Activated CD8-positive, alpha-beta T cell treated with anti-CD3 and anti-CD28 coated beads, Interleukin-2, amount 10 ng/mL, durations not matched to agents 7 days and 5 days (primary cell): ENCODE measurements at regions of chr15 and their contacts with region 1.

Region 1: DNA sequence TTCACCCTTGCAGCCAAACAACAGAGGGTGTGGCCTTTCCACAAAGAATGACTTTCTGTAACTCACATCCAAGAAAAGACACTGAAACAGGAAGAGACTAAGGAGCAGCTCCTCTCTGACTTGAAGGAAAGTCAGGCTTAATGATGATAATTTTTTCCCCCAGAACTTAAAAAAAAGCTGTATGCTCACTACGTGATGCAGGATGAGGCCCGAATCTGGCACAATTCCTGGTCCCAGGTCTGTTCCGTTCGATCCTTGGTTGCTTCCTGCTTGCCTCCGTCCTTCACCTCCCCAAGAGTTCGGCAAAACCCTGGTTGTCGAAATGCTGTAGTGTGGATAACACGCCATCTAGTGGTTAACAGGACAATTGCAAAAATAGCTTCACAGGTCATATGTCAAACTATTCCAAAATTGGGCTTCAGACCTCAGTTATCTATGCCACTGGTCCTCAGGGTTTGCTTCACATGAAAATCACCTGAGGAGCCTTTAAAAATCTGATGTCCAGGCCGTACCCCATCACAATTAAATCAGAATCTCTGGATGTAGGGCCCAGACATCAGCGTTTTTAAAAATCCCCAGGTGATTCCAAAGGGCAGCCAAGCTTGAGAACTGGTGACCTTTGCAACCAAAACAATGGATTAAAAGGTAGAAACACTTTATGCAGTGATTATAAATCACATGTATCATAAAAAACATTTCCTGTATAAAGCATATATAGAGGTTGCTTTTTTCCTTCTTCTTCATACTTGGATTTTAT is 28.1 kb upstream of the SYNM start:
- DNase-seq: peak; percentile 60
- ATAC-seq: peak; percentile 88
- H3K4me3 Mint-ChIP-seq: peak overlapping the region; percentile 63
- H3K27ac Mint-ChIP-seq: no peak overlapping the region
- H3K4me1 Mint-ChIP-seq: peaks cover 5% of the 10 kb centered on the region
- H3K27me3 Mint-ChIP-seq: peaks cover 17% of the 10 kb centered on the region

Region 2: GRCh38 chr15:98518823-98519561 is 557.7 kb before region 1 on chr15:
- CTCF ChIA-PET with region 1: interaction called, 17 read pairs
- POLR2A ChIA-PET with region 1: no interaction called
- DNase-seq: peak; percentile 63
- ATAC-seq: peak; percentile 86
- H3K4me3 Mint-ChIP-seq: no peak overlapping the region
- H3K27ac Mint-ChIP-seq: no peak overlapping the region
- H3K4me1 Mint-ChIP-seq: peaks cover 7% of the 10 kb centered on the region
- H3K27me3 Mint-ChIP-seq: peaks cover 4% of the 10 kb centered on the region

Region 3: GRCh38 chr15:98881526-98882520 is 194.9 kb before region 1 on chr15:
- CTCF ChIA-PET with region 1: interaction called, 13 read pairs
- POLR2A ChIA-PET with region 1: no interaction called
- DNase-seq: peak; percentile 22
- ATAC-seq: peak; percentile 61
- H3K4me3 Mint-ChIP-seq: no peak overlapping the region
- H3K27ac Mint-ChIP-seq: no peak overlapping the region
- H3K4me1 Mint-ChIP-seq: no peaks in the 10 kb centered on the region
- H3K27me3 Mint-ChIP-seq: no peaks in the 10 kb centered on the region

Region 4: DNA sequence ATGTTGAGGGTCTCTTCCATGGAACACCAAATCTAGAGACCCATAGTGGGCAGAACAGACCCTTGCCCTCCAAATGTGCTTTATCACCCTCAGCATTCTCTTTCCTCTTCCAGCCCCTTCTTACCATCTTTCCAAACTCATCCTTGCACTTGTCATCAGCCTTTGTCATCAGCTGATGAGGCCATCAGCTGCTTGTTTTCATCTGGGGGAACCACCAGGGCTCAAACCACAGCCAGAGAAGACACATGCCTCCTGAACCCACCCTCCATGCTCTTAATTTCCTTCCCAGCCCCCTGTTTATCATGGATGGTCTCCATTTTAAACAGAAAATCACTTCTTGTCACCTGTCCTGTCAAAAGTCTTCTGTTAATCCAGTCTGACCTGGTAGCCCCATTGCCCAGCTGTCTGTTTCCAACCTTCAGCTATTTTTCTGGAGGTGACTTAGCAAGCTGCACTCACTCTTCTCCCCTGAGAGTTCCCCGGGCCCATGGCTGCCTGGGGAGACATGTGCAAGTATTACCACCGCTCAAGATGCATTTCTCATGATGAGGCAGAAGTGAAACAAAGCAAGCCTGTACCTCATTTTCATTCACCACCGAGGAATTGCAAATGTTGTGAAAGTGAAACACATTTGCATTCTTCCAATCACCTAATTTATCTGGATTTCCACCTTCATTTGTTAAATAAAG is 13.4 kb after region 1 on chr15:
- CTCF ChIA-PET with region 1: interaction called, 16 read pairs
- POLR2A ChIA-PET with region 1: interaction called, 3 read pairs
- DNase-seq: no peak
- ATAC-seq: no peak
- H3K4me3 Mint-ChIP-seq: no peak overlapping the region
- H3K27ac Mint-ChIP-seq: no peak overlapping the region
- H3K4me1 Mint-ChIP-seq: peaks cover 6% of the 10 kb centered on the region
- H3K27me3 Mint-ChIP-seq: no peaks in the 10 kb centered on the region

Region 5: DNA sequence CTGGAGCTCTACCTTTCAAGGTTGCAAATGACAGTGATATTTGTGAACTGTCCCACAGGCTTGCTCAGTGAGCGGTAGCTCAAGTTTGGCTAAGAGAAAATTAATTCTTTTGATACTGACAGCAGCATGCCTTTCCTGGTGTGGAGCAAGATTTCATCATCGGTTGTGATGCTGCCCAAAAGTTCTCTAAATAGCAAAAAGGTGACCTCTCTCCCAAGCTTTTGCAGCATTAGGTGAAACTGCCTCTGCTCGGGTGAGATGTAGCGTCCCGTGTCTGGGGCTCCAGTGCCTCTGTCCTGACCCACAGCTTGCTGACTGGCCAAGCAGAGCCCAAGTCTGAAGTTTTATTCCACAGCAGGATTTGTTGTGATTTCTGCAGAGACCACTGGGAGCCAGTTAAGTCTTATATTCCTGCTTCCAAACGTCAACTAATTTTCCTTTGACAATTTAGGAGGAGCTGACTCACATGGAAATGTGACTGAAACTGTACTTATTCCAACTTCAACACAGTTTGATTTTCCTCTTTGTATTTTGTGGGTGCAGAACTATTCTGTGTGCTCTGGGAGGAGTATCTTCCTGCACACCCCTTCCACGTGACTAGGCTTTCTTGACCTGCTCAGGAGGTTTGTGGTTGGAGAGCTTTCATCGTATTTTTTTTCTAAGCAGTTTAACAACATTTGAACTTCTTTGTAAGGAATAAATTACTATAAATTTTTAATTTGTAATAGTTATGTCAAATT is 34.0 kb after region 1 on chr15:
- CTCF ChIA-PET with region 1: interaction called, 13 read pairs
- POLR2A ChIA-PET with region 1: no interaction called
- DNase-seq: no peak
- ATAC-seq: no peak
- H3K4me3 Mint-ChIP-seq: no peak overlapping the region
- H3K27ac Mint-ChIP-seq: no peak overlapping the region
- H3K4me1 Mint-ChIP-seq: peaks cover 29% of the 10 kb centered on the region
- H3K27me3 Mint-ChIP-seq: peaks cover 20% of the 10 kb centered on the region

Region 6: DNA sequence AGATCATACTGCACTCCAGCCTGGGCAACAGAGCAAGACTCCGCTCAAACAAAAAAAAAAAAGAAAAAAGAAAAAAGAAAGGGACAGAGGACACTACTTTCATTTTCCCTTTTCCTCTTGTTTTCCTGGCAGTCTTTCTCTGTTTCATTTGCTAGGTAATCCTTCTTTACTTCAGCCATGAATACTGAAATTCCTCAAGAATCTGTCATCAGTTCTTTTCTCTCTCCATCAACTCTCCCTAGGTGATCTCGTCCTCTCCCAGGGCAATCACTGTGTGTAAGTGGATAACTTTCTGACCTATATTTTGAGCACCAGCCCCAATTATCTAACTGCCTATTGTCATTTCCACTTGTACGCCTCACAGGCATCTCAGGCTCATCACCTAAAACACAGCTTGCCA is 121.1 kb after region 1 on chr15:
- CTCF ChIA-PET with region 1: no interaction called
- POLR2A ChIA-PET with region 1: no interaction called
- DNase-seq: no peak
- ATAC-seq: no peak
- H3K4me3 Mint-ChIP-seq: no peak overlapping the region
- H3K27ac Mint-ChIP-seq: no peak overlapping the region
- H3K4me1 Mint-ChIP-seq: no peaks in the 10 kb centered on the region
- H3K27me3 Mint-ChIP-seq: peaks cover under 1% of the 10 kb centered on the region